Activated CD4-positive, alpha-beta T cell treated with anti-CD3 and anti-CD28 coated beads, Interleukin-2, amount 10 ng/mL, durations not matched to agents 7 days and 5 days (primary cell): ENCODE measurements at regions of chr2 and their contacts with region 1.

Region 1: DNA sequence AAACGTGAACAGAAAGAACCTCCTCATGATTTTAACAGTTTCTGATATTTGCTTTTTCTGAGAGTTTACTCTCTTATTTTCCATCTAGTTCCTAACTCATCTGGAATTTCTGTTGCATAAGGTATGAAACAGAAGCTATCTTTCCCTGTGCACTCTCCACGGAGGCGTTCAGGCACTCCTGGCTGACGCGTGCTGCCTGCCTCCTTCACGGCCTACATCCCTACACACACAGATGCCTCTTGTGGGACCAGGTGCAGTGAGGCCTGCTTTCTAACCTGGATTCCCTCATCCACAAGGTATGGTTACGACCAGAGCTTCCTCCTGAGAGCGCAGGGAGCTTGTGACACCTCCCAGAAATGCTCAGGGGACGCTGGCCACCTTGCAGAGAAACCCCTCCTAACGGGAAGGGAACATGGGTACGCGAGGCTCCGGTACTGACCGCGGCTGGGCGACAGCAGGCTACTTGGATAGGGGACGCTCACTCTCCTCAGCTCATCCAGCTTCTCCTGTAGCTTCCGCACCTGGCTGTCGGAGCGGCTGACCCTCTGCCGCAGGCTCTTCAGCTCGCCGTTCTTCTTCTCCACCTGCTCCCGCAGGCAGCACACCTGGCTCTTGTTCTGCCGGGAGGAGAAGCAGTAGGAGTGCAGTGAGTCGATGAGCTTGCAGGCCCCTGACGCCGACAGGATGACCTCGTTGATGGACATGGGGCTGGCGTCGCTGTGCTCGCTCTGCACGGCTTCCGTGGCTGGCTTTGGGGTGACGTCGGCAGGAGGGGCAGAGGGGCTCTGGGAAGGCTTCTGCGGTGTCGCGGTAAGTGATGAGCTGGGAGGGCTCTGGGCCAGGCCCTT is 4.3 kb downstream of the THAP4 start:
- DNase-seq: no peak
- H3K4me3 Mint-ChIP-seq: no peak overlapping the region
- H3K27ac Mint-ChIP-seq: no peak overlapping the region
- H3K4me1 Mint-ChIP-seq: peaks cover 23% of the 10 kb centered on the region
- H3K27me3 Mint-ChIP-seq: no peaks in the 10 kb centered on the region

Region 2: GRCh38 chr2:241199897-241200821 is 432.5 kb before region 1 on chr2:
- CTCF ChIA-PET with region 1: no interaction called
- POLR2A ChIA-PET with region 1: no interaction called
- DNase-seq: no peak
- H3K4me3 Mint-ChIP-seq: no peak overlapping the region
- H3K27ac Mint-ChIP-seq: no peak overlapping the region
- H3K4me1 Mint-ChIP-seq: no peaks in the 10 kb centered on the region
- H3K27me3 Mint-ChIP-seq: no peaks in the 10 kb centered on the region

Region 3: GRCh38 chr2:241519669-241520068 is 113.0 kb before region 1 on chr2:
- CTCF ChIA-PET with region 1: no interaction called
- POLR2A ChIA-PET with region 1: no interaction called
- DNase-seq: no peak
- H3K4me3 Mint-ChIP-seq: no peak overlapping the region
- H3K27ac Mint-ChIP-seq: no peak overlapping the region
- H3K4me1 Mint-ChIP-seq: peaks cover 29% of the 10 kb centered on the region
- H3K27me3 Mint-ChIP-seq: peaks cover 3% of the 10 kb centered on the region

Region 4: DNA sequence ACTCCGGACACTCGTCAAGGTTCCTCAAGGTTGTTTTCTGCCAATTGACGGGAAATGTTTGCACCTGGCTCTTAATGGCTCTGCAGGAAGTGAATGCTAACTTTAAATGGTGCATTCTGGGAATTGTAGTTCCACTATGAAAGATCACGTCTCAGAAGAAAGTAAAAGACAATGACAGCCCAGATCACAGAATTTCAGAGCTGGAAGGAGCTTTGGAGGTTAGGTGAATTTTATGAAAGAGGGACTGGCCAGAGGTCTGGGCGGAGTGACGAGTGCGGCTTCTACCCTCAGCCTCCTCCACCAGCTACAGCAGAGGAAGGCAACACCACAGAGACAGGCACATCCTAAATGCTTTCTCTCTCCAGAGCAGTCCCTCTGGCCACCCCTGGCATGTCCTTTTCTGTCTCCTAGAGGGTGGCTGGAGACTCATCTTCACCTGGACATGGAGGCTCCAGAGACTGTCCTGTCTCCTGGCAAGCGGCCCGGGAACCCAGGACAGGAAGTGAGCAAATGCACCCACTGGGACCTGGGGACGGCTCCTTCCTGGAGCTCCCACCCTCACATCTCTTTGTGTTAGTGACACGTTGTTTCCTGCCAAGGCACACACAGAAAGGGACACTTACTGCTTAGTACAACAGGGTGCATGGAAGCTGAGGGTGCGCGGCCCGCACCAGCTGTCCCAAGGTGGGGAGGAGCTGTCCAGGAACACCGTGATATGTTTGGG is 15.1 kb before region 1 on chr2:
- CTCF ChIA-PET with region 1: interaction called, 13 read pairs
- POLR2A ChIA-PET with region 1: no interaction called
- DNase-seq: peak; percentile 47
- H3K4me3 Mint-ChIP-seq: peak overlapping the region; percentile 70
- H3K27ac Mint-ChIP-seq: peak overlapping the region; percentile 94
- H3K4me1 Mint-ChIP-seq: peaks cover 54% of the 10 kb centered on the region
- H3K27me3 Mint-ChIP-seq: no peaks in the 10 kb centered on the region

Region 5: GRCh38 chr2:242010577-242011513 is 378.1 kb after region 1 on chr2:
- CTCF ChIA-PET with region 1: no interaction called
- POLR2A ChIA-PET with region 1: no interaction called
- DNase-seq: peak; percentile 28
- H3K4me3 Mint-ChIP-seq: no peak overlapping the region
- H3K27ac Mint-ChIP-seq: no peak overlapping the region
- H3K4me1 Mint-ChIP-seq: peaks cover 19% of the 10 kb centered on the region
- H3K27me3 Mint-ChIP-seq: peaks cover 8% of the 10 kb centered on the region